Dorsolateral prefrontal cortex (tissue), 120 donors: ENCODE measurements at regions of chr13 and their contacts with region 1.

Region 1: GRCh38 chr13:60654415-60654814 is 257.4 kb downstream of the TDRD3 start:
- DNase-seq: peak in 7 of 10 donors; percentile 10 to 71 (median 59)
- H3K4me3 ChIP-seq: no peak overlapping the region
- H3K27ac ChIP-seq: no peak overlapping the region
- H3K27me3 ChIP-seq: peaks cover 0 to 5% (median 0%) of the 10 kb centered on the region in 45 donors
- CTCF ChIP-seq: peak in 52 of 56 donors; percentile 32 to 70 (median 56)

Region 2: GRCh38 chr13:60379837-60380236 is 274.6 kb before region 1 on chr13:
- intact Hi-C with region 1: no loop called
- DNase-seq: no peak
- H3K4me3 ChIP-seq: no peak overlapping the region
- H3K27ac ChIP-seq: no peak overlapping the region
- H3K27me3 ChIP-seq: no peaks in the 10 kb centered on the region
- CTCF ChIP-seq: peak in 1 of 56 donors; percentile 7

Region 3: GRCh38 chr13:61410669-61411297 is 756.4 kb after region 1 on chr13:
- intact Hi-C with region 1: loop called (anchors 5 to 10 kb)
- DNase-seq: no peak
- H3K4me3 ChIP-seq: peak overlapping the region in 30 of 59 donors; percentile 0 to 45 (median 27)
- H3K27ac ChIP-seq: no peak overlapping the region
- H3K27me3 ChIP-seq: peaks cover 0 to 21% (median 7%) of the 10 kb centered on the region in 45 donors
- CTCF ChIP-seq: peak; percentile 27 to 76 (median 62)

Region 4: DNA sequence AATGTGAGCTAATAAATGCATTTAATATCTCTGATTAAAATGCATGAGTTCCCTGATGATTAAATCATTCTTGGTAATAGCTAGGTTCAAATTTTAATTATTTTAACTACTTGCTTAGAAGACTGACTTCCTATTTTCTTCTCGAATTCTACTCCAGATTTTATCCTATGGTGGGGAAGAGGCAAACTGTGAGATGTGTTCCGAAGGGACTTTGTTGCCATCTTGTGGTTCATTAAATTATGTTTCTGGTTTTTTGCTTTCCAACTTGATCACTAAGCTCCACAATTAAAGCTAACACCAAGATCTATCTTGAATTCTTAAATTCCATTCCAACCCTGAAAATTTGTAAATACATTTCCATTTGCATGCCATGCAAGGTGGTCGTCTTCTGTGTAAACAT is 1299.7 kb after region 1 on chr13:
- intact Hi-C with region 1: loop called in 1 of 2 experiments (anchors 5 kb)
- DNase-seq: no peak
- H3K4me3 ChIP-seq: no peak overlapping the region
- H3K27ac ChIP-seq: no peak overlapping the region
- H3K27me3 ChIP-seq: no peaks in the 10 kb centered on the region
- CTCF ChIP-seq: peak; percentile 24 to 85 (median 67)